ENCODE measurements at regions of chr2 and their contacts with region 1.

Region 1: DNA sequence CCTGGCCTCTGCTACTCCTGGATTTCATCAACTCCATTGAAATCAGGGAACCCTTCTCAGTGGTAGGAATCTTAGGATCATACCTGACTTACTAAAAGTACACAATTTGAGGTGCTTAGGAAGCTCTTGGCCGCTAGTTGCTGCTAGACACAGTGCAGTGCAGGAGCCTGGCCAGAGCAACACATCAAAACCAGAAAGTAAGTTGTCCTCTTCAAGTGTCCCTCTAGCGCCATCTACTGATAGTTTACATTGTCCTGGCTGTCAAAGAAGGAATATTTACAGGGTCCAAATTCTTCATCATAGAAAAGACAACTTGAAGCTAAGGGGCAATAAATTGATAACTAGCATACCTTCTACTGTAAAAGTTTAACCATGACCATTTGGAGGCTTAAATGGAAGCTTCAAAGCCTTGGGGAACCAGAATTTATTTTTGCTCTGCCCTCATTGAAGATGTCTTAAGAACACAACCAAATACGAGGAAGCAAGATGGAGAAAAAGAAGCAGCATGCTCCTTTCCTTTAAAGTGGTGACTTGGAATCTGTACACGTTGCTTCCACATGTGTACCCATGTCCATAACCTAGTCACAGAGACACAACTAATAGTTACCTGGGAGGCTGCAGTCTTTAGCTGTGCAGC is 889.1 kb upstream of the GCFC2 start:
- DNase-seq: peak; percentile 49 to 85 (median 72)
- H3K4me3 ChIP-seq: no peak overlapping the region
- H3K27ac ChIP-seq: no peak overlapping the region
- H3K4me1 ChIP-seq: no peaks in the 10 kb centered on the region
- H3K27me3 ChIP-seq: no peaks in the 10 kb centered on the region
- CTCF ChIP-seq: peak; percentile 64 to 82 (median 75)
- POLR2A ChIP-seq: no peak

Region 2: DNA sequence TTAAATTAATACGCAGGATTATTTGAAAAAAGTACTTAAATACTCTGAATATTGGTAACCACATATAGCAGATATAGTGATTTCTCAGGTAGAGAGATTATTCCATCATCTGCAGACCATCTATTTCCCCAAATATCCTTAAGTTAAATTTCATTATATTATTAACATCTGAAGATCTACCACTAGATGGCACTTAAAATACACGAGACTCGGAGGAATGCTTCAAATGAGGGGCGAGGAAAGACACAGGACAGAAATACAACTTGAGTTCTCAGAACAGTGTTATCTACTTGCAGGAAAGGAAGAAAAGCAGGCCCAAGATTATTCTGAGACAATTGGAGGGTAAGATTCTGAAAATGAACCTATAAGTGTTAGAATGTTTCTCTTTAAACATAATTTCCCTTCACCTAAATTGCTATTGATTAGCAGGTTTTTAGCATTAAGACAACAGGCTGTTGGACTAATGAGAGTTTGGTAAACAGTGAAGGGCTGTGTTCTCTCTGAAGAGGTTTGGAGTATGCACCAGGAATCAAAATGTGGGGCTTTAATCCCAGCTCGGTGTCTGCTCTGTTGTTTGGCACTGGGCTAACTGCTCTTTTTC is 812.2 kb before region 1 on chr2:
- intact Hi-C with region 1: loop called in 1 of 2 experiments (anchors 10 kb)
- DNase-seq: no peak
- H3K4me3 ChIP-seq: no peak overlapping the region
- H3K27ac ChIP-seq: no peak overlapping the region
- H3K4me1 ChIP-seq: no peaks in the 10 kb centered on the region
- H3K27me3 ChIP-seq: no peaks in the 10 kb centered on the region
- CTCF ChIP-seq: peak; percentile 24 to 55 (median 44)
- POLR2A ChIP-seq: no peak

Region 3: DNA sequence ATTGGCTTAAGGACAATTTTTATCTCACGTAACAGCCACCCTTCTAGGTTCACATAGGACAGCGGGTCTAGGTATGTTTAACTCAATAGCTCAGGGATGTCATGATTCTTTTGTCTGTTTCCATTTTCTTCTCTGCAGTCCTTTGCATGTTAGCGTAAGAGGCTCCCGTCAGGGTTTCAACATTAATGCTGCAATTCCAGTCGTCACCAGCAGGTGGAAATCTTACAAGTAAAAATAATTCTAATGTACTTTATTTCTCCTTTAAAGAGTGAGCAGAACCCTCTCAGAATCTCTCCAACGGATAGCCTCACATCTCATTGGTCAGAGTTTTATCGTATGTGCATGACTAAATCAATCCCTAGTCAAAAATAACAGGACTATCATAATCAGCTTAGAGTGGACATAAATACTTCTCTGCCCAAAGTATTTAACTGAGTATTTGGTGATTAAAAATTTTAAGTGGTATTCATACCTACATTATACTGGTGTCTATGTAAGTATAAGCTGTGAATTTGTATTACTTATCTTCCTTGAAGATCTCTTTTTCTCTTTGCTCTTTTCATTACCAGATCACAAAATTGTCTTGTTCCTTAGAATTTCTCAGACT is 401.9 kb before region 1 on chr2:
- intact Hi-C with region 1: loop called (anchors 5 kb)
- DNase-seq: peak; percentile 54 to 85 (median 74)
- H3K4me3 ChIP-seq: no peak overlapping the region
- H3K27ac ChIP-seq: no peak overlapping the region
- H3K4me1 ChIP-seq: no peaks in the 10 kb centered on the region
- H3K27me3 ChIP-seq: no peaks in the 10 kb centered on the region
- CTCF ChIP-seq: peak; percentile 59 to 75 (median 62)
- POLR2A ChIP-seq: no peak

Region 4: GRCh38 chr2:76204048-76204447 is 395.8 kb before region 1 on chr2:
- intact Hi-C with region 1: loop called (anchors 5 kb)
- DNase-seq: no peak
- H3K4me3 ChIP-seq: no peak overlapping the region
- H3K27ac ChIP-seq: no peak overlapping the region
- H3K4me1 ChIP-seq: no peaks in the 10 kb centered on the region
- H3K27me3 ChIP-seq: no peaks in the 10 kb centered on the region
- CTCF ChIP-seq: no peak
- POLR2A ChIP-seq: no peak

Region 5: DNA sequence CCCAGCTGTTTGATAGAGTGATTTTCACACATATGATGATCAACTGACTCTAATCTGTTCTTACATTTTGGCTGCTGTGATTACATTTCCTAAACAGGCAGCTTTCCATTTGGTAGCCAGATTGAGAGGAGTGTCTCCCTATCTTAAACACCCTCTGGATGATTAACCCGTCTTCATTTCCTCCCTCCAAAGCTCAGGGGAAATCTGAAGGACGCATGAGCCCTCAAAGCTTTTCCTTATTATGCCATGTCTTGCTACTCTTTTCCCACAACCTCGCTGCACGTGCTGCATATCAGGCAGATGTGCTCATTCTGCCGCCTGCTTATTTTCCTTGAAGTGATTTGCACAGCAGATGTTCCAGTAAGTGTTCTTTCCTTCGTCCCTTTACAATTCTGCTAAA is 84.9 kb after region 1 on chr2:
- intact Hi-C with region 1: no loop called
- DNase-seq: no peak
- H3K4me3 ChIP-seq: no peak overlapping the region
- H3K27ac ChIP-seq: no peak overlapping the region
- H3K4me1 ChIP-seq: no peaks in the 10 kb centered on the region
- H3K27me3 ChIP-seq: no peaks in the 10 kb centered on the region
- CTCF ChIP-seq: no peak
- POLR2A ChIP-seq: no peak

Measured in adrenal gland (tissue), 19 donors.